Uterus (tissue), 4 donors: ENCODE measurements at regions of chr5 and their contacts with region 1.

Region 1: DNA sequence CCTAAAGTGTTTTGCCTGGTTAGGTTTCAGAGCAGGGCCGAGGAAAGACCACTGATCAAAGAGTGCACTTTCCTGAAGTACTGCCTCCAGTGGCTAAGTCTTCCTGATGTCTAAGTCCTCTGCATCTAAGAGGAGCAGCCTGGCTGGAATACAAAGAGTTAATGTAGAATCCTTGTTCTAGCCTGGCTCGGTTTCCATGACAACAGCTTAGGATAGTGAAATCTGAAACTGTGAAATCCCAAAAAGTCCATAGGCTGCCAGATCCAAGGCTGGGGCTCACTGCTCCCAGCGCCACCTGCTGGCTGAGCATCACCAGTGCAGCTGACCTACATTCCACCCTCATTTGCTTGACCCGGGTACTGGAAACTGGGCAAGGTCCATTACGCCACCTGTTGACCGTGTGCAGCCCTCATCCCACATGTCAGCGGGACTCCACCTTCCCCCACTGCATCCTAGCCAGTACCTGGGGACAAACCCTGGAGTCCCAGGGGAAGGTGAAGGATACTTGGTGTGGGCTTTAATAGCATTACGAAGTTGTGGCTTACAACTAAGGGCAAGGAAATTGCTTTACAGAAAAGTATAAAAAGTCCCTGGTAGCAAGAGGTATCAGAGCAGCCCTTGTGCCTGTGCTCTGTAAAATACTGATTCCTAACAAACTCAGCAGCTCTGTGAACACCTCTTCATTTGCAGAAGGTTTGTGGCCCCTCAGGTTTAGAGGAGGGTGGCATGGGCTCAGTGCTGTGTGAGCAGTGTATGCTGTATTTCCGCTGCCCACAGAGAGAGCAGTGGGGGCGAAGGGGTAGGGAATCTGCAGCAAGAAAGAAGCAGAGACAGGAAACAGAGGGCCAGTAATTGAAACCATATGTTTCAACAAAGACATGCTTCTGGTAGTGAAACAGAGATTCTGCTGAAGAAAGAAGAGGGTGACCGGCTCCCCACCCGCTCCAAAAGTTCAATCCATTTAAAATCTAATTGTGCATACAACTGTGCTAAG is 36.0 kb downstream of the PCDHGC5 start:
- DNase-seq: peak; percentile 90 to 93
- H3K4me3 ChIP-seq: no peak overlapping the region
- H3K27ac ChIP-seq: peak overlapping the region; percentile 77 to 78
- H3K4me1 ChIP-seq: peaks cover 0 to 6% of the 10 kb centered on the region in 2 donors
- H3K27me3 ChIP-seq: no peaks in the 10 kb centered on the region
- CTCF ChIP-seq: peak; percentile 98 to 99 (median 99)
- POLR2A ChIP-seq: peak in 1 of 2 donors; percentile 28

Region 2: DNA sequence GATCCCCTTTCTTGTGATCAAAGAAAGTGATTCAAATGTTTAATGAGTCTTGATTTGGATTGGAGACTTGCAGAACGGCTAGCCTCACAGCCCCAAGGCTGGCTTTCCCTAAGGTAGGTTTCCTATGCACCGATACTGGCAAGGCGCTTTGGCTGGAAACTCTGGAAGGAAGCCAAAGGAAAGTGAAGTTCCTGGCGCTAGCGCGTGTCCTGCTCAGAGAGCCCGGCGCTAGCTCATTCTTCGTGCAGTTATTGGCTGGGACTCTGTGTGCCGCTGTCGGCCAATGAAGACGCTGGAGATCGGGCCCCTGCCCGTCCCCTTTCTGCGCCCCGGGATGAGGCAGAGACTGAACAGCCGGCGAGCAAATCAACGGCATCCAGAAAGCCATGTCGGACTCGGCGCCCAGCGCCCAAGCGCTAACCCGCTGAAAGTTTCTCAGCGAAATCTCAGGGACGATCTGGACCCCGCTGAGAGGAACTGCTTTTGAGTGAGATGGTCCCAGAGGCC is 49.2 kb before region 1 on chr5 and contains the start of gene PCDHGC3:
- intact Hi-C with region 1: loop called (anchors 10 kb)
- DNase-seq: peak; percentile 95
- H3K4me3 ChIP-seq: peak within 1 kb of the TSS; percentile 54 to 55
- H3K27ac ChIP-seq: peak within 1 kb of the TSS; percentile 90 to 92
- H3K4me1 ChIP-seq: peaks cover 15 to 21% of the 10 kb centered on the region in 2 donors
- H3K27me3 ChIP-seq: no peaks in the 10 kb centered on the region
- CTCF ChIP-seq: peak; percentile 58 to 80 (median 66)
- POLR2A ChIP-seq: peak; percentile 70 to 74
- total RNA-seq, gene PCDHGC3: 25.9 to 146 (median 123) TPM